Endothelial cell of umbilical vein (primary cell): ENCODE measurements at regions of chr11 and their contacts with region 1.

Region 1: DNA sequence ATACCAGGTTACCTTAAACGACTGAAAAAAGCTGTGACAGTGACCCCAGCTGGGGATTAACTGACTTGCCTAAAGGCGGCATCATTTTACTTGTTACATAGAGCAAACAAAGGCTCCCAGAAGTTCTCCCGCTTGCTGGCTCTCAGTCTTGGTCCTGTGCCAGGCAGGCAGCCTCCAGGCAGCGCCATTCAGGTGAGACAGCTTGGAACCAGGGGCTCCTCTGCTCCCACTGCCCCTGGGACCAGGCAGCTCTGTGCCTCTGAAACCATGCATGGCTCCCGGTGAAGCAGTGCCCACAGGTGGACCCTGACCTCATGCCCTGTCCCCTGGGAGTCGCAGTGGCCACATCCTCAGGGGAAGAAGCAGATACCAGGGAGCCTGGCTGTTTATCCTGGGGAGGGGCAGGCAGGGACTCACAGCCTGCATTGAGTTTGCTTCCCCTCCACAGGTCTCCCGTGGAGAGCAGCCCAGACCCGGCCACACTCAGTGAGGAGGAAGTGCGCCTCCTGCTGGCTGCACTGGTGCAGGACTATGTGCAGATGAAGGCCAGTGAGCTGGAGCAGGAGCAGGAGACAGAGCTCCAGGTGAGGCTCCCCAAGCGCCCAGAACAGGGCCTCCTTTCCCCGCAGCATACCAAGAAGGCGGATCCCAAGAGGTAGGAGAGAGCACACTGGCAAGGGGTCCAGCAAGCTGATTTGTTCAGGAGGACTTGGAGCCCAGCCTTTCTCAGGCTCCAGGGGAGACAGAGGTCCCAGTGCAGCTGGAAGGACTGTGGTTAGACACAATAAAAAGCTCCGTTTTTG is 15.6 kb upstream of the CYP2R1 start:
- DNase-seq: peak; percentile 42
- H3K4me3 ChIP-seq: no peak overlapping the region
- H3K27ac ChIP-seq: no peak overlapping the region
- H3K4me1 ChIP-seq: peaks cover 16% of the 10 kb centered on the region
- H3K27me3 ChIP-seq: peaks cover 0 to 13% of the 10 kb centered on the region in 2 experiments
- CTCF ChIP-seq: peak; percentile 77 to 93
- POLR2A ChIP-seq: no peak

Region 2: GRCh38 chr11:14373931-14374646 is 533.5 kb before region 1 on chr11:
- CTCF ChIA-PET with region 1: no interaction called
- POLR2A ChIA-PET with region 1: no interaction called
- dilution Hi-C with region 1: no loop called
- intact Hi-C with region 1: no loop called
- DNase-seq: peak; percentile 21
- H3K4me3 ChIP-seq: no peak overlapping the region
- H3K27ac ChIP-seq: no peak overlapping the region
- H3K4me1 ChIP-seq: peaks cover 4% of the 10 kb centered on the region
- H3K27me3 ChIP-seq: no peaks in the 10 kb centered on the region
- CTCF ChIP-seq: no peak
- POLR2A ChIP-seq: no peak

Region 3: GRCh38 chr11:14519917-14520746 is 387.5 kb before region 1 on chr11 and contains the start of gene PSMA1:
- CTCF ChIA-PET with region 1: interaction called, 8 read pairs
- POLR2A ChIA-PET with region 1: no interaction called
- dilution Hi-C with region 1: no loop called
- intact Hi-C with region 1: loop called (anchors 5 kb)
- DNase-seq: peak; percentile 98
- H3K4me3 ChIP-seq: peak within 1 kb of the TSS; percentile 86 to 97 (median 88)
- H3K27ac ChIP-seq: peak within 1 kb of the TSS; percentile 97
- H3K4me1 ChIP-seq: peaks cover 15% of the 10 kb centered on the region
- H3K27me3 ChIP-seq: no peaks in the 10 kb centered on the region
- CTCF ChIP-seq: no peak
- POLR2A ChIP-seq: peak; percentile 88
- total RNA-seq, gene PSMA1: 194 and 203 TPM in 2 replicates

Region 4: GRCh38 chr11:14764579-14765527 is 142.8 kb before region 1 on chr11:
- CTCF ChIA-PET with region 1: interaction called, 17 read pairs
- POLR2A ChIA-PET with region 1: no interaction called
- dilution Hi-C with region 1: no loop called
- intact Hi-C with region 1: no loop called
- DNase-seq: peak; percentile 27
- H3K4me3 ChIP-seq: no peak overlapping the region
- H3K27ac ChIP-seq: no peak overlapping the region
- H3K4me1 ChIP-seq: peaks cover 2% of the 10 kb centered on the region
- H3K27me3 ChIP-seq: peaks cover 0 to 1% of the 10 kb centered on the region in 2 experiments
- CTCF ChIP-seq: no peak
- POLR2A ChIP-seq: no peak

Region 5: DNA sequence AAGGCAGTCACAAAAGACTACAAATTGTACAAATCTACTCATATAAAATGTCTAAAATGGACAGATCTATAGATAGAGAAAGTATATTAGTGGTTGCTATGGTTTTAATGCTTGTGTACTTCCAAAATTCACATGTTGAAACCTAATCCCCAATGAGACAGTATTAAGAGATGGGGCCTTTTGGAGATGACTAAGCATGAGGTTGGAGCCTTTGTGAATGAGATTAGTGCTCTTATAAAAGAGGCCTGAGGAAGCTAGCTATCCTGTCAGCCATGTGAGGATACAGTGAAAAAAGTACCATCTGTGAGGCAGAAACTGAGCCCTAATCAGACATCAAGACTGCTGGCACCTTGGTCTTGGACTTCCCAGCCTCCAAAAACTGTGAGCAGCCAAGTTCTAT is 98.1 kb before region 1 on chr11:
- CTCF ChIA-PET with region 1: interaction called, 13 read pairs
- POLR2A ChIA-PET with region 1: no interaction called
- dilution Hi-C with region 1: no loop called
- intact Hi-C with region 1: no loop called
- DNase-seq: no peak
- H3K4me3 ChIP-seq: no peak overlapping the region
- H3K27ac ChIP-seq: no peak overlapping the region
- H3K4me1 ChIP-seq: no peaks in the 10 kb centered on the region
- H3K27me3 ChIP-seq: no peaks in the 10 kb centered on the region
- CTCF ChIP-seq: no peak
- POLR2A ChIP-seq: no peak

Region 6: DNA sequence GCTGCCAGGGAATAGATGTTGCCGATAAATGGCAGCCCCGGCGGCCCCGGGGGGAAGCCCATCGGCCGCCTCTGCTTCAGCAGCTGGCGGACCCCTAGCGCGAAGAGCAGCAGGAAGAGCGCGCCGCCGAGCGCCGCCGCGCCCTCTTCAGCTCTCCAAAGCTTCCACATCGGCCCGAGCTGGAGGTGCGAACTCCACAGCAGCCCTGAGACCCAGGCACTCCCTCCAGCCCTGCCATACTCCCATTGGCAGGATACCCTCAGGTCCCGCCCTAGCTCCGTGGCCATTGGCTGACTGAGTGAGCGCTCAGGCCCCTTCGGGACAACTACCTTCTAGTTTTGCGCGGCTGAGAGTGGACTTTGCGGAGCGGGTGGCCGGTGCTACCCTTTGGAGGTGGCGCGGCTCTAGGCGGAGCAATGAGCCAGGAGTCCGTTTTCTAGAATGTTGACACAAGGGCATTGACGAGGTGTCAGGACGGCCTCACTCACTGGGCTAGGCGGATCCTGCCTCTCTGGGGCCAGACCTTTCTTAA is 15.5 kb before region 1 on chr11 and contains the start of gene CYP2R1:
- CTCF ChIA-PET with region 1: interaction called, 154 read pairs
- POLR2A ChIA-PET with region 1: interaction called, 7 read pairs
- dilution Hi-C with region 1: no loop called
- intact Hi-C with region 1: loop called (anchors 1 kb)
- DNase-seq: peak; percentile 98
- H3K4me3 ChIP-seq: peak within 1 kb of the TSS; percentile 52 to 73 (median 60)
- H3K27ac ChIP-seq: peak within 1 kb of the TSS; percentile 54
- H3K4me1 ChIP-seq: peaks cover 9% of the 10 kb centered on the region
- H3K27me3 ChIP-seq: no peaks in the 10 kb centered on the region
- CTCF ChIP-seq: no peak
- POLR2A ChIP-seq: no peak
- total RNA-seq, gene CYP2R1: 8.0 and 11.6 TPM in 2 replicates

Region 7: DNA sequence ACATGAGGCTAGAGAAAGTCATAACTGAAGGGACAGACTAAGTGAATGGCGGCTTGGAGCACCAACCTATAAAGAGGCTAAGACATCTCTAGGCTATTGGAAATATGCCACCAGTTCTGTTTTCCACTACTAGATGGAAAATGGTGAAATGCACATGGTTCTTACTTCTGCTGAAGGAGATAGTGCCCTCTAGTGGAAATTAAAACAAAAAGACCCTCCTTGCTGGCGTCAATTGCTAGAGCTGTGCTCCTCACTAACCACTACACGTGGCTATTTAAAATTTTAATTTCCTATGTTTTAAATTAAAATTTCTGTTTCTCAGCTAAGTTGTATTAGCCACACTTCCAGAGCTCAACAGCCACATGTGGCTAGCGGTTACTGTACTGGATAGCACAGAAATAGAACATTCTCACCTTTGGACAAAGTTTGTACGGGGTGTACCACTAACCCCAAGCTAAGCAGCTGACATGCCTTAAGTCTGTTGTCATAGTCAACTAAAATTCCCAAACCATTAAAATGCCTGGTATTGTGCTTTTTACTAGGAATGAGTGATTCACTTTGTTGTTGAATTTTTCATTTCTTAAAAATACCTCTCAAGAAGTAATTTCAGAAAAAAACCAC is 98.6 kb after region 1 on chr11:
- CTCF ChIA-PET with region 1: interaction called, 153 read pairs
- POLR2A ChIA-PET with region 1: no interaction called
- dilution Hi-C with region 1: no loop called
- intact Hi-C with region 1: loop called (anchors 1 kb)
- DNase-seq: peak; percentile 42
- H3K4me3 ChIP-seq: no peak overlapping the region
- H3K27ac ChIP-seq: no peak overlapping the region
- H3K4me1 ChIP-seq: no peaks in the 10 kb centered on the region
- H3K27me3 ChIP-seq: peaks cover 0 to 2% of the 10 kb centered on the region in 2 experiments
- CTCF ChIP-seq: peak in 1 of 2 donors; percentile 46
- POLR2A ChIP-seq: no peak